Cardiac septum (tissue), 1 donor: ENCODE measurements at regions of chr1 and their contacts with region 1.

Region 1: GRCh38 chr1:201191653-201192260 is 1.1 kb downstream of the IGFN1 start:
- DNase-seq: no peak

Region 2: GRCh38 chr1:201172999-201173610 is 18.7 kb before region 1 on chr1:
- intact Hi-C with region 1: loop called (anchors 1 kb)
- DNase-seq: peak; percentile 53